ENCODE measurements at regions of chr2 and their contacts with region 1.

Region 1: DNA sequence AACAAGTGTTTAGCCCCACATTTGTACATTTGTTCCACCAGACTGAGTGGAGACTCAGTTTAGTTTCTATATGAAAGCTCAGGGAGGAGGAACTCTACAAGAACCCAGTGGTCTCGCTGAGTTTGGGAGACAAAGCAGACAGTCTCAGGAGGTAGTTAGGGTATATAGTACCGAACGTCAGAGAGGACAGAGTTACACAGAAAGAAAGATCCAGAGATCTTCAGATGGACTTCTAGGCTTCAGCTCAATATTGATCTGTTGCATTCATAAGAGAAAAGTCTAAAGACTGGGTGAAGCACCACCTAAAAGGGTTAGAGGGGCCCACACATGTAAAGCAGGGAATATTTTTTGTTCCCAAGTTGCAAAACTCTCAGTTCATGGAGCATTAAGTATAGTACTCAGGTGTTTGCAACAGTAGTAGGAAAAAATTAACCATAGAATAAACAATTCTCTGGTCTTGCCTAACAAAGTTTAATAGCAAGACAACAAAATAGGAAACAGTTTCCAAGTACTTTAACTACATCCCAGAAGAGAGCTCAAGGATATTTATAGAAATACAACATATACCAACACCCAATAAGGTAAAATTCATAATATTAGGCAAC is 4.2 kb downstream of the TFPI start:
- DNase-seq: no peak
- H3K4me3 ChIP-seq: no peak overlapping the region
- H3K4me3 Mint-ChIP-seq: no peak overlapping the region
- H3K27ac Mint-ChIP-seq: no peak overlapping the region
- H3K4me1 ChIP-seq: peaks cover 20% of the 10 kb centered on the region; the same call in 1 of the 2 replicates
- H3K4me1 Mint-ChIP-seq: peaks cover 16% of the 10 kb centered on the region
- H3K27me3 ChIP-seq: no peaks in the 10 kb centered on the region
- H3K27me3 Mint-ChIP-seq: no peaks in the 10 kb centered on the region
- CTCF ChIP-seq: no peak

Region 2: DNA sequence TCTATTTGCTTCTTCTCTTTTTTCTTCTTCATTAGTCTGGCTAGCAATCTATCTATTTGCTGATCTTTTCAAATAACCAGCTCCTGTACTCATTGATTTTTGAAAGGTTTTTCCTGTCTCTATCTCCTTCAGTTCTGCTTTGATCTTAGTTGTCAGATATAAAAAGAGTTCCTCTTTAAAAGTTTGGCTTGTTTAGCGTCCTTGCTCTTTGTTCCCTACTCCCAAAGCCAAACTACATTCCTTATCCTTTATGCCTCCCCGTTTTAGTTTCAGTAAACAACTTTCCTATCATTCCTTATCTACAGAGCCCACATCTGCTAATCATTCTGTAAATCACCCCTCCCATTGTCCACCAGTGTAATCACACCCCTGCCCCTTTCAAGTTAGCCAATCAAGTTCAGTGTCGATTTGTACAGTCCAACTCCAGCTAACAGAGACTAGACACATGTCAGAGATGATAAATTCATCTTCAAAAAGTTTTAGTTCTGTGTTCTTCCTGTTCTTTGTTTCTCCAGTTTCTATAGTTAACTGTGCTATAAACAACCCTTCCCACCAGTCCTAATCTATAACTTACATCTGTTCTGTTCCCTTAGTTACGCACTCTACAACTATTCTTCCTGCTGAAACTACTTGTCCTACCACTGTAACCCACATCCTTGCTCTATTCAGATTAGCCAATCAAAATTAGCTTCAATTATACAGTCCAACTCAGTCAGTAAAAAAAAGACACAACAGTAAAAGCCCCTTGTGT is 40.2 kb before region 1 on chr2:
- CTCF ChIA-PET with region 1: no interaction called
- POLR2A ChIA-PET with region 1: no interaction called
- intact Hi-C with region 1: loop called (anchors 2 kb)
- DNase-seq: peak; percentile 65 to 69
- H3K4me3 ChIP-seq: no peak overlapping the region
- H3K4me3 Mint-ChIP-seq: peak overlapping the region; percentile 45
- H3K27ac Mint-ChIP-seq: peak overlapping the region; percentile 56
- H3K4me1 ChIP-seq: peaks cover 32% of the 10 kb centered on the region
- H3K4me1 Mint-ChIP-seq: peaks cover 42% of the 10 kb centered on the region
- H3K27me3 ChIP-seq: no peaks in the 10 kb centered on the region
- H3K27me3 Mint-ChIP-seq: no peaks in the 10 kb centered on the region
- CTCF ChIP-seq: no peak

Measured in Caco-2 (cell line).